ENCODE measurements at regions of chr9 and their contacts with region 1.

Region 1: GRCh38 chr9:137223078-137223970 is 1.3 kb upstream of the RNF208 start:
- DNase-seq: peak; percentile 100
- H3K4me3 ChIP-seq: peak overlapping the region; percentile 91
- H3K27ac ChIP-seq: peak overlapping the region; percentile 65
- H3K4me1 ChIP-seq: peaks cover 26% of the 10 kb centered on the region
- CTCF ChIP-seq: no peak

Region 2: GRCh38 chr9:137046098-137046787 is 177.1 kb before region 1 on chr9 and contains the start of gene NPDC1:
- CTCF ChIA-PET with region 1: no interaction called
- POLR2A ChIA-PET with region 1: no interaction called
- intact Hi-C with region 1: loop called (anchors 1 kb)
- DNase-seq: peak; percentile 82
- H3K4me3 ChIP-seq: peak within 1 kb of the TSS; percentile 57
- H3K27ac ChIP-seq: no peak within 1 kb of the TSS
- H3K4me1 ChIP-seq: peaks cover 4% of the 10 kb centered on the region
- CTCF ChIP-seq: peak; percentile 81
- total RNA-seq, gene NPDC1: 0.21 and 0.32 TPM in 2 replicates

Region 3: DNA sequence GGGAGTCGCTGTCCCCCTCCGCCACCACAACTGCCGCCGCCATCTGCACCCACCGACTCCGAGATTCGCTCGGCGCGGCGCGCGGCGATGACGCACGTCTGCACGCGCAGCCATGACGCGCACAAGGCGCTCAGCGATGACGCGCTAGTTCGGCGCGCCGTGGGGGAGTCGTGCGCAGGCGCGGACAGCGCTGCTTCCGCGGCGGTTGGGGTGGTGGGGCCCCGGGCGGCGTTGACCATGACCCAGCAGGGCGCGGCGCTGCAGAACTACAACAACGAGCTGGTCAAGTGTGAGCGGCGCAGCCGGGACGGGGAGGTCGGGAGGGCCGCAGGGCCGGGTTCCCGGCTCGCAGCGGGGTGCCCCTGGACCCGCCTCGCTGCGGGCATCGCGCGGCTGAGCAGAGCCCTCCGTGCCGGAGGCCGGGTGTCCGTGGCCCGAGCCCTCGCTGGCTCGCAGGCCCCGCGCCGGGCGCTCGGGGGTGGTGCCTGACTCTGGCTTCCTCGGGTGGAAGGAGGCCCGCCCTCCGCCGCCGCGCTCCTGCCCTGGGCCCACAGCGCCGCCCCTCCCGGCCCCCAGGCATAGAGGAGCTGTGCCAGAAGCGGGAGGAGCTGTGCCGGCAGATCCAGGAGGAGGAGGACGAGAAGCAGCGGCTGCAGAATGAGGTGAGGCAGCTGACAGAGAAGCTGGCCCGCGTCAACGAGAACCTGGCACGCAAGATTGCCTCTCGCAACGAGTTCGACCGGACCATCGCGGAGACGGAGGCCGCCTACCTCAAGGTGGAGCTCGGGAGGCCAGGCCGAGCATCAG is 34.6 kb before region 1 on chr9 and contains the starts of genes ANAPC2 and SSNA1:
- CTCF ChIA-PET with region 1: interaction called, 3 read pairs
- POLR2A ChIA-PET with region 1: interaction called, 3 read pairs
- intact Hi-C with region 1: loop called (anchors 2 kb)
- DNase-seq: peak; percentile 98
- H3K4me3 ChIP-seq: peak within 1 kb of the TSS; percentile 94
- H3K27ac ChIP-seq: peak within 1 kb of the TSS; percentile 92
- H3K4me1 ChIP-seq: peaks cover 27% of the 10 kb centered on the region
- CTCF ChIP-seq: peak; percentile 69
- total RNA-seq, gene ANAPC2: 34.8 and 38.6 TPM in 2 replicates
- total RNA-seq, gene SSNA1: 111 and 130 TPM in 2 replicates

Region 4: GRCh38 chr9:137406876-137407589 is 183.7 kb after region 1 on chr9:
- CTCF ChIA-PET with region 1: no interaction called
- POLR2A ChIA-PET with region 1: no interaction called
- intact Hi-C with region 1: no loop called
- DNase-seq: no peak
- H3K4me3 ChIP-seq: no peak overlapping the region
- H3K27ac ChIP-seq: no peak overlapping the region
- H3K4me1 ChIP-seq: no peaks in the 10 kb centered on the region
- CTCF ChIP-seq: no peak